Activated CD4-positive, alpha-beta T cell treated with anti-CD3 and anti-CD28 coated beads for 36 hours (primary cell): ENCODE measurements at regions of chr15 and their contacts with region 1.

Region 1: DNA sequence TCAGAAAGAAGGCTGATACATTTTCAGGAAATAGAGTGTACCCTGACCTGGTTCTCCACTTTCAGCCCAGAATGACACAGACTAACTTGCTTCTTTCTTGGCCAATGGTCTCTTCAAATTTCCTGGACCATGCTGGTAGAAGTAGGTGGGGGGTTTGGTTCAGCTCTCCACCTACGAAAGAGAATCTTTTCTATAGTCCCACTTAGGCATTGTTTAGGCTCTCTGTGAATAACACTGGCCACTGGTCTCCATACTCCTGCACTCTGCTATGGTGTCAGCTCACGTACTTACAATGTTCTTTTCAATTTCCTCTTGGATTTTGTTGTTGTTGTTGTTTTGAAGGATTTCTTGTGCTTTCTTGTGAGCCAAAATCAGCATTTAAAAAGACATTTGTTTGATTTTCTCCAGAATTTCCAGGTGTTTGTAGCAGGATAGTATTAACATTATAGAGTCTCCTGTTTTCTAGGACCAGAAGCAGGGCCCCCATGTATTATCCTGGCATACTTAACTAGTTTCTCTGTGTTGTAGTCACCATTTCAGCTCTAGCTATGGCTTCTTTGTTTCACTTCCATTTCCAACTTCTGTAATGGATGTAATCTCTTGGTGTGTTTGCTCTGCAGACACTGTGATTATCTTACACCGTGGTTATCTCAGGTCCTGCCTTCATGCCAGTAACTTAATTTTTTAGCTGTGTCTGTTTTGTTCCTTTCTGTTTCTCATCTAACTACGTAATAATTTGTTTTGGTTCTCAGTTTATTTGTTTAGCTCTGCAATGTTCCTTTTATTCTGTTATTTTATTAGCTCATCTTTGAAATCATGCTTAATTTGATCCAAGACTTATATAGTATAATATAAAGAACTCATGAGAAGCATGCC is 61.4 kb downstream of the CHRNA7 start:
- DNase-seq: no peak
- ATAC-seq: no peak
- H3K4me3 Mint-ChIP-seq: no peak overlapping the region
- H3K27ac Mint-ChIP-seq: no peak overlapping the region
- H3K4me1 Mint-ChIP-seq: no peaks in the 10 kb centered on the region
- H3K27me3 Mint-ChIP-seq: peaks cover 17% of the 10 kb centered on the region

Region 2: GRCh38 chr15:32117122-32117521 is 25.4 kb after region 1 on chr15:
- CTCF ChIA-PET with region 1: no interaction called
- POLR2A ChIA-PET with region 1: no interaction called
- intact Hi-C with region 1: loop called in 1 of 2 experiments (anchors 1 kb)
- DNase-seq: no peak
- ATAC-seq: no peak
- H3K4me3 Mint-ChIP-seq: no peak overlapping the region
- H3K27ac Mint-ChIP-seq: no peak overlapping the region
- H3K4me1 Mint-ChIP-seq: no peaks in the 10 kb centered on the region
- H3K27me3 Mint-ChIP-seq: peaks cover 3% of the 10 kb centered on the region